ENCODE measurements at regions of chr4 and their contacts with region 1.

Region 1: GRCh38 chr4:6681187-6681586 is 12.5 kb upstream of the S100P start:
- DNase-seq: no peak
- H3K4me3 ChIP-seq: no peak overlapping the region
- H3K27ac ChIP-seq: no peak overlapping the region
- H3K4me1 ChIP-seq: peaks cover 6 to 20% (median 12%) of the 10 kb centered on the region in 4 experiments
- H3K27me3 ChIP-seq: no peaks in the 10 kb centered on the region

Region 2: DNA sequence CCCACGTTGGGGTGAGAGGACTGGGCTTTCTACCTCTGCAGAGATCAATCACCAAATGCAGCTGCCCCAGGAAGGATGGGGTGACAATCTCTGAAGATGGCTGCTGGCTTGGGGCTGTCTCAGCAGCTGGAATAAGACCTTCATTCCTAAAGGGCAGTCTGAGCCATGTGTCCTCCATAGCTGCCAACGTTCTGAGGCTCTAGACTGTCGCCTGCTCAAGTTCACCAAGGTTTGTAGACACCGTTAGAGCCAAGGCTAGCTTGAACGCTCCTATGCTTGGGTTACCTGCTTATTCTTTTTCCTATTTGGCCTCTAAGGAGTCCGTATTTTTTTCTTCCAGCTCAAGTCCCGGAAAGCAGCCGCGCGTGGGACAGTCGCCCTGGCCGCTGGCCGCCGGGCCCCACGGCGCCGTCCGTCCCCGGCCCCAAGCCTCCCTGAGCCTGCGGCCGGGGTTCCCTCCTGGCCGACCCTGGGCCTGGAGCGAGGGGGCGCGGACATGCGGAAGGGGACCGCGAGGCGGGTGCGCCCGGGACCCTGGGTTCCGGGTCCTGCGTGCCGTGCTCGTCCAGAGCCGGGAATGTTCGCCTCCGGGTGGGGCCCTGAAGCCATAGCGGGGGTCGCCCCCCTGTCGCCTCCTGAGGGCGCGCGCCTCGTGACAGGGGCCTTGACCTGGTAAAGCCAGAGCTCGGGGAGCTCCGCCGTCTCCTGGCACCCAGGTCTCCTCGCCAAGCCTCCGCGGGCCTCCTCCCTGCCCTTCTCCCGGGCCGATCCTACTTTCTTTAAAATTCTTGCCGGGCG is 17.4 kb before region 1 on chr4:
- CTCF ChIA-PET with region 1: interaction called, 10 read pairs
- POLR2A ChIA-PET with region 1: no interaction called
- DNase-seq: no peak
- H3K4me3 ChIP-seq: peak overlapping the region in 3 of 7 experiments; percentile 11 to 34 (median 24)
- H3K27ac ChIP-seq: no peak overlapping the region
- H3K4me1 ChIP-seq: peaks cover 3 to 11% (median 7%) of the 10 kb centered on the region in 4 experiments
- H3K27me3 ChIP-seq: peaks cover 18 to 74% (median 42%) of the 10 kb centered on the region in 5 experiments

Region 3: GRCh38 chr4:7358100-7358735 is 677.0 kb after region 1 on chr4:
- CTCF ChIA-PET with region 1: no interaction called
- POLR2A ChIA-PET with region 1: no interaction called
- DNase-seq: no peak
- H3K4me3 ChIP-seq: no peak overlapping the region
- H3K27ac ChIP-seq: no peak overlapping the region
- H3K4me1 ChIP-seq: no peaks in the 10 kb centered on the region
- H3K27me3 ChIP-seq: peaks cover 0 to 23% (median 5%) of the 10 kb centered on the region in 5 experiments

Measured in common myeloid progenitor, CD34-positive (primary cell).